Activated CD8-positive, alpha-beta T cell treated with anti-CD3 and anti-CD28 coated beads, Interleukin-2, amount 10 ng/mL, durations not matched to agents 7 days and 5 days (primary cell): ENCODE measurements at regions of chr7 and their contacts with region 1.

Region 1: GRCh38 chr7:138002096-138002827 is 376 bp upstream of the CREB3L2 start:
- DNase-seq: peak; percentile 98
- ATAC-seq: peak; percentile 96
- H3K4me3 Mint-ChIP-seq: peak overlapping the region; percentile 96
- H3K27ac Mint-ChIP-seq: peak overlapping the region; percentile 94
- H3K4me1 Mint-ChIP-seq: peaks cover 35% of the 10 kb centered on the region
- H3K27me3 Mint-ChIP-seq: no peaks in the 10 kb centered on the region

Region 2: DNA sequence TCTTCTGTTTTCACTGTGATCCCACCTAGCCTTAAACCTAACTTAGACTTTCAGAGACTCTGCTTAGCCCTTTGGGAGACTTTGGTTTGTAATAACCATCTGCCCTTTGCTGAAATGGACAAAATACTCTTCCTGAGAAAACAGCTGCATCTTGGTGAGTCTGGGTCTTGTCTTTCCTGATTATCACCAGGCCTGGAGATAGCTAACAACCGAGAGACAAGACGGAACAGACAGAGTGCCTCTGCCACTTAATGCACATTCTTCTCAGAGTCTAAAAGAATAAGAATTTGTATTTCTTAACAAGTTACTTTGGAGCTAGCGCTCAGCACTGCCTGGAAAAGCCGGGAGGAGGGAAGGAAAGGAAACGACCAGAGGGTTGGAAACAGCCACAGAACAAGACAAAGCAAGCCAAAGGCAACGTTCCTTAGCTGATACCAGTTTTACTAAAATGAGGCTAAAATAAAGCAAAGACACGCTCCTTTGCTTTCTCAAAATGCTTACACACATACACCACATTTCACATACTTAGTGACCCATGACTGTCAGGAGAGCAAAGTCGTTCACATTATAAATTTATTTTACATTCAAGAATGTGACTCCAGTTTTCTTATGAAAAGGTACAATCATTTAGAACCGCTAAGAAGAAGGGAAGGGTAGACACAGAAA is 85.1 kb before region 1 on chr7:
- CTCF ChIA-PET with region 1: interaction called, 20 read pairs
- POLR2A ChIA-PET with region 1: no interaction called
- DNase-seq: no peak
- ATAC-seq: no peak
- H3K4me3 Mint-ChIP-seq: no peak overlapping the region
- H3K27ac Mint-ChIP-seq: no peak overlapping the region
- H3K4me1 Mint-ChIP-seq: peaks cover 15% of the 10 kb centered on the region
- H3K27me3 Mint-ChIP-seq: no peaks in the 10 kb centered on the region

Region 3: DNA sequence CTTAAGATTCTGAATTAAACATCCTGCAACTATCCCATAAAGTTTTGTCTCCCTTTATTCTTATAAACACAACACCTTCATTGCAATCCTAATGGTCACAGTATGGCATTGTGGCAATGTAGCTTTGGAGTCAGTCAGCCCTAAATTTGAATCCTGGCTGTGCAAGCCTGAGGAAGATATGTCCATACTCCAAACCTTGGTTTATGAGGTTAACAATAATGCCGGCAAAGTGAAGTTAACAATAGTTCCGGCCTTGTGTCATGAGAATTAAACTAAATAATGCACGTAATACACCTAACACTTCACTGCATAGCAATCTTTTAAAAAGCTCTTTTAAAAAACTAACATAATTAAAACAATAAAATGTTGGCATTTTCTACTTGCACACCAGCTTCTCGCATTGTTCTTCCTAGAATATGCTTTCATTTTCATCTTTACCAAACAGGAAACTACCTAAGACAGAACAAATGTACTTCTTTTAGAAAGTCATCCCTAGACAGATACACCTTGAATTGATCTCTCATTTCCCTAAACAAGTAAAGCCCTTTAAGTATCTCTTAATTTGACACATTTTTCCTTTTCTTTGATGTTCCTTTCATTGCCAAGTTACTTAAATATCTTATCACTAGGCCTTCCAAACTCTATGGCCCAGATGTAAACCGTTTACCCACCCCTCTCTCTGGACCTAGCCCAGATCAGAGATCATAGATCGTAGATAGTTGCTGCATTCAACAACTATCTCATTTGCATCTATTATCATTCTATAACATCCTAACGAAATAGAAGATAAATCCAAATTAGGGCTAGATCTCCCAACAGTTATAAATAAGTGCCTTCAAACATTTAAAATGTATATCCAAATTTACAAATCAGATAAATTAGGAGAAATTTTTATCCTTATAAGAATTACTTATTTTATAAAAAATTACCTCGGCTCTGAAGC is 67.0 kb before region 1 on chr7:
- CTCF ChIA-PET with region 1: interaction called, 28 read pairs
- POLR2A ChIA-PET with region 1: interaction called, 16 read pairs
- DNase-seq: no peak
- ATAC-seq: peak; percentile 84
- H3K4me3 Mint-ChIP-seq: peak overlapping the region; percentile 80
- H3K27ac Mint-ChIP-seq: peak overlapping the region; percentile 92
- H3K4me1 Mint-ChIP-seq: peaks cover 34% of the 10 kb centered on the region
- H3K27me3 Mint-ChIP-seq: no peaks in the 10 kb centered on the region

Region 4: GRCh38 chr7:138015096-138015495 is 12.8 kb after region 1 on chr7:
- CTCF ChIA-PET with region 1: interaction called, 31 read pairs
- POLR2A ChIA-PET with region 1: no interaction called
- DNase-seq: no peak
- ATAC-seq: no peak
- H3K4me3 Mint-ChIP-seq: no peak overlapping the region
- H3K27ac Mint-ChIP-seq: no peak overlapping the region
- H3K4me1 Mint-ChIP-seq: no peaks in the 10 kb centered on the region
- H3K27me3 Mint-ChIP-seq: peaks cover 5% of the 10 kb centered on the region